ENCODE measurements at regions of chr3 and their contacts with region 1.

Region 1: GRCh38 chr3:150603153-150603979 is at the start of gene SELENOT:
- DNase-seq: peak; percentile 93
- H3K4me3 Mint-ChIP-seq: peak within 1 kb of the TSS; percentile 96
- H3K27ac Mint-ChIP-seq: peak within 1 kb of the TSS; percentile 97
- H3K4me1 Mint-ChIP-seq: peaks cover 59% of the 10 kb centered on the region
- H3K27me3 Mint-ChIP-seq: no peaks in the 10 kb centered on the region
- total RNA-seq, gene SELENOT: 68.4 to 71.2 TPM

Region 2: GRCh38 chr3:150546226-150547044 is 56.9 kb before region 1 on chr3 and contains the starts of genes EIF2A and SERP1:
- CTCF ChIA-PET with region 1: interaction called, 5 read pairs
- intact Hi-C with region 1: loop called (anchors 1 kb)
- DNase-seq: peak; percentile 99
- H3K4me3 Mint-ChIP-seq: peak within 1 kb of the TSS; percentile 97
- H3K27ac Mint-ChIP-seq: peak within 1 kb of the TSS; percentile 95
- H3K4me1 Mint-ChIP-seq: peaks cover 69% of the 10 kb centered on the region
- H3K27me3 Mint-ChIP-seq: no peaks in the 10 kb centered on the region
- total RNA-seq, gene EIF2A: 133 to 135 TPM
- total RNA-seq, gene SERP1: 95.9 to 105 TPM

Region 3: DNA sequence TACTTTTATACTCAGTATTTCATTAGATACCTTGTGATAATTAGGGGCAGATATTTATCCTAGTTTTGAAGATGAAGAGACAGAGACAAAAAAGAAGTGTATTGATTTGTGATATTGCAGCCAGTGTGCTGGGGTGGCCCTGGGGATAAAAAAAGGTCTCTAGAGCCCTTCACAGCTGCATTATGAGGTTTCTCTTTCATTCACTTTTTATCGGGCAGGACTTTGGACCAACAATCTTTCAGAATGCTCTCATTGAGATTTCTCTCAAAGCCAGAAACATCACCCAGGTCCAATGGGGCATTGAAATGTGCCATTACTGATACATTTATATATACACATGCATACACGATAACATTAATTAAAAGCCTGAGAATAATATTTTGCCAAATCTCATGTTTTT is 20.7 kb before region 1 on chr3:
- CTCF ChIA-PET with region 1: no interaction called
- intact Hi-C with region 1: loop called (anchors 2 kb)
- DNase-seq: no peak
- H3K4me3 Mint-ChIP-seq: no peak overlapping the region
- H3K27ac Mint-ChIP-seq: peak overlapping the region; percentile 81
- H3K4me1 Mint-ChIP-seq: peaks cover 8% of the 10 kb centered on the region
- H3K27me3 Mint-ChIP-seq: no peaks in the 10 kb centered on the region

Region 4: DNA sequence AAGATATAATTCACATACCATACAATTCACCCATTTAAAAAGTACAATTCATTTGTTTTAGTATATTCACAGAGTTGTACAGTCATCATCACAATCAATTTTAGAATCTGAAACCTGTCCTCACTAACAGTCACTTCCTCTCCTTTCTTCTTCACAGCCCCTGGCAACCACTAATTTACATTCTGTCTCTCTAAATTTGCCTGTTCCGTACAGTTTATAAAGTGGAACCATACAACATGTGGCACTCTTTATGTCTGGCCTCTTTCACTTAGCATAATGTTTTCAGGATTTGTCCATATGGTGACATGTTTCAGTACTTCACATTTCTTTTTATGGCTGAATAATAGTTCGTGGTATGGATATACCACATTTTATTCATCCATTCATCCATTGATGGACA is 77.7 kb after region 1 on chr3:
- CTCF ChIA-PET with region 1: no interaction called
- intact Hi-C with region 1: loop called (anchors 2 kb)
- DNase-seq: peak; percentile 23
- H3K4me3 Mint-ChIP-seq: no peak overlapping the region
- H3K27ac Mint-ChIP-seq: peak overlapping the region; percentile 31
- H3K4me1 Mint-ChIP-seq: peaks cover 16% of the 10 kb centered on the region
- H3K27me3 Mint-ChIP-seq: no peaks in the 10 kb centered on the region

Region 5: DNA sequence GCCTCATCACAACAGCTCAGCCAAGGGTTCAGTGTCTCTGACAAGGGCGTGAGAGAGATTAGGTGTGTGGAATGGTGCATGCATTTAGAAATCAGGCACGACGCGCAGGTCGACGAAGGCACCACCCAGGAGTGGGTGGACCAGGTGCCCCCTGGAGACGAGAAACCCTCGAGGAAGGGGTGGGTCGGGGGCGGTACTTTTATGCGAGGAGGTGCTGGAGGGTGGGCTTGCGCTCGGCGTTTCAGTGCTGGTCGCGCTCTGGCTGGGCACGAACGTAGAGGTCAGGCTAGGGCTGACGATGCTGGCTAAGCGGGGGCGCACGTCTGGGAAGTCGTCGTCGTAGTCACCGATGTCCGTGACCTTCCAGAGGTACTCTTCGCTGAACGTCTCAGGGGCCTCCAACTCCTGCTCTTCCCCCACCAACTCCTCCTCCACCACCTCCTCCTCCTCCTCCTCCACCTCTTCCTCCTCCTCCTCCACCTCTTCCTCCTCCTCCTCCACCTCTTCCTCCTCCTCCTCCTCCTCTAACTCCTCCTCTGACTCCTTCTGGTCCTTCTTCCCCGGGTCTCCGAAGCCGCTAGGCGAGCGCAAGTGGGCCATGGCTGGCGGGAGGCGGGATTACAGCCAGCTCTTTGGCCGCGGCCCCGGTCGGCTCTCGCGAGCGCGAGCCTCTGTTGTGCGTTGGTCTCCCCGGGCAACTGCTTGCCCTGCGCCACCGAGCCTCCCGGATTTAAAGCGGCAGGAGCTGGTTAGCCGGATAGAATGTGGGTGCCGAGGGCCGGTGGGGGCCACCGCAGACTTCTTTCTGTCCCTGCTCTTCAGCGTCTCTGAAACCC is 100.2 kb after region 1 on chr3 and contains the start of gene ERICH6:
- CTCF ChIA-PET with region 1: no interaction called
- intact Hi-C with region 1: loop called (anchors 1 kb)
- DNase-seq: peak; percentile 88
- H3K4me3 Mint-ChIP-seq: peak within 1 kb of the TSS; percentile 96
- H3K27ac Mint-ChIP-seq: no peak within 1 kb of the TSS
- H3K4me1 Mint-ChIP-seq: peaks cover 25% of the 10 kb centered on the region
- H3K27me3 Mint-ChIP-seq: no peaks in the 10 kb centered on the region
- total RNA-seq, gene ERICH6: not detected

Region 6: GRCh38 chr3:151568184-151568583 is 964.8 kb after region 1 on chr3:
- CTCF ChIA-PET with region 1: no interaction called
- intact Hi-C with region 1: no loop called
- DNase-seq: no peak
- H3K4me3 Mint-ChIP-seq: no peak overlapping the region
- H3K27ac Mint-ChIP-seq: no peak overlapping the region
- H3K4me1 Mint-ChIP-seq: no peaks in the 10 kb centered on the region
- H3K27me3 Mint-ChIP-seq: no peaks in the 10 kb centered on the region